Activated T-helper 1 cell treated with anti-CD3 and anti-CD28 coated beads, Interleukin-12 subunit alpha, Interleukin-12 subunit beta, Interleukin-2, Interleukin-4 antibody, amounts not matched to agents 30 ng/mL and 10 ng/mL and 1 ng/mL, durations not matched to agents 14 hours and 24 hours and 36 hours (primary cell): ENCODE measurements at regions of chr14 and their contacts with region 1.

Region 1: DNA sequence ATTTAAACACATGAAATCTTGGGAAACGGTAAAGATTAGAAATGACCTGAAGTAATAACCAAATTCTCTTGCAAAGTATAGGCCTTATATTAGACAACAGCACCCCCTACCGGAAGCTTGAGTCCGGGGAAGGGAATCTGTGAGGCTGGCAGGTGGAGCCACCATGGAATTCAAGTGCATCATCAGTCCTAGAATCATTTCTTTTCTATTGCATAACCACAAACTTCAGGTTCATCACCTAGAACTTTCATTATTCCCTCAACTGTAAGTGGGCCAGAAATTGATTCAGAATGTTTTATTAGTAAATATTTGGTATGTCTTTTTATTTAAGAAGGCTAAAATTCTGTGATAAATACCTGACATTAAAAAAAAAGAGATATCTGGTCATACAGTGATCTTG is 48.5 kb downstream of the AP5M1 start:
- DNase-seq: peak; percentile 44
- H3K4me3 Mint-ChIP-seq: no peak overlapping the region
- H3K27ac Mint-ChIP-seq: no peak overlapping the region
- H3K4me1 Mint-ChIP-seq: no peaks in the 10 kb centered on the region
- H3K27me3 Mint-ChIP-seq: no peaks in the 10 kb centered on the region

Region 2: DNA sequence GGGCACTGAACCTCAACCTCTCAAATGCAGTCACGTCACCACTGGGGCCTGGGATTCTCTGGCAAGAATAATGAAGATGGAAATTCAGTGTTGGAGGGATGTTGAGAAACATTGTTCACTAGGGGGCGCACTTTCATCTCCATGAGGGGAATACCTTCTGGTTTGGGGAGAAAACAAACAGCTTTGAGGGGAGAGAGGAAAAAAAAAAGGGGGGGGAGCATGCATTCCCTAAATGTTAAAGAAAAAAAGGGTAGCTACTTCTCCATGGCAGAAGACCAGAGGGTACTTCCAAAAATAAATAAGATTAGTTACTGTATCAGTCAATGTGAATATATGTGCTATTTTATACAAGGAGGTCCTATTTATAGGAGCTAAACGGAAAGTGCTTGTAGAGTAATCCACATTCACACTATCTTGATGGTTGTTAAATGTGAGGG is 1871.1 kb before region 1 on chr14:
- intact Hi-C with region 1: loop called (anchors 10 kb)
- DNase-seq: peak; percentile 28
- H3K4me3 Mint-ChIP-seq: no peak overlapping the region
- H3K27ac Mint-ChIP-seq: no peak overlapping the region
- H3K4me1 Mint-ChIP-seq: peaks cover 18% of the 10 kb centered on the region
- H3K27me3 Mint-ChIP-seq: no peaks in the 10 kb centered on the region

Region 3: GRCh38 chr14:56555921-56556570 is 761.3 kb before region 1 on chr14:
- intact Hi-C with region 1: loop called (anchors 5 kb)
- DNase-seq: no peak
- H3K4me3 Mint-ChIP-seq: no peak overlapping the region
- H3K27ac Mint-ChIP-seq: no peak overlapping the region
- H3K4me1 Mint-ChIP-seq: no peaks in the 10 kb centered on the region
- H3K27me3 Mint-ChIP-seq: peaks cover 15% of the 10 kb centered on the region

Region 4: GRCh38 chr14:57066887-57067513 is 250.3 kb before region 1 on chr14:
- intact Hi-C with region 1: loop called (anchors 2 kb)
- DNase-seq: no peak
- H3K4me3 Mint-ChIP-seq: no peak overlapping the region
- H3K27ac Mint-ChIP-seq: no peak overlapping the region
- H3K4me1 Mint-ChIP-seq: peaks cover 7% of the 10 kb centered on the region
- H3K27me3 Mint-ChIP-seq: peaks cover 55% of the 10 kb centered on the region

Region 5: DNA sequence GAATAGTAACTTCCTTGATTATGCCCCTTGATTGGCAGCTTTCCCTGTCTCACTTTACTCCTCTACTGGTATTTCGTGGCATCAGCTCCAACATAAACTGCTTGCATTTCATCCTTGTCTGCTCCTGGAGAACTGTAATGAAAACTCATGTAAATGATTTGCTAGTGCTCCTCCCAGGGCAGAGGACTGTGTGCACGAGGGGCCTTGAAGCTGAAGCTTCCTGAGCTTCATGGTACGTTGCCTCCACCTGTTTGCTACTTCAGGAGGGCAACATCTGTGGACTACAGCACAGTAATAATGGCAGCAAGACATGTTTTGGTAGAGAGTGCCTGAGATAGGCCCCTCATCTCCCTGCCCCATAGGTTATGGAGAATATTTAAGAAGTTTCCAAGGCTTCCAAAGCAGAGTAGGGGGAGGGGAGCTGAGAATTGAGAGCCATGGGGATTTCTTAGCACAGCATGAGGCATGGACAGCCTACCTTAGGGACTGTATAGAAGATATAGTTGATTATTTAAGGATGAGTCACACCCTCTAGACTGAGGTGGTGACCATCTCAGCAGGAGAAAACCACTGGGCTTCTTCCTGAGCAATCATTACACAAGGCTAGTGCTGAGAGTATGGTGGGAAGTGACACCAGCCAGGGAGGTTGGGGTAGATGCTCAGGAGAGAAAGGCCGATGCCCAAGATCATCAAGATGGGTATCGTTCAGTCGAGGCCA is 146.9 kb after region 1 on chr14:
- intact Hi-C with region 1: no loop called
- DNase-seq: no peak
- H3K4me3 Mint-ChIP-seq: no peak overlapping the region
- H3K27ac Mint-ChIP-seq: no peak overlapping the region
- H3K4me1 Mint-ChIP-seq: no peaks in the 10 kb centered on the region
- H3K27me3 Mint-ChIP-seq: no peaks in the 10 kb centered on the region

Region 6: GRCh38 chr14:58072288-58073071 is 755.2 kb after region 1 on chr14:
- intact Hi-C with region 1: loop called (anchors 10 kb)
- DNase-seq: peak; percentile 22
- H3K4me3 Mint-ChIP-seq: no peak overlapping the region
- H3K27ac Mint-ChIP-seq: no peak overlapping the region
- H3K4me1 Mint-ChIP-seq: no peaks in the 10 kb centered on the region
- H3K27me3 Mint-ChIP-seq: peaks cover 2% of the 10 kb centered on the region